Activated naive CD8-positive, alpha-beta T cell treated with anti-CD3 and anti-CD28 coated beads, Interleukin-2, amount 10 ng/mL, durations not matched to agents 7 days and 5 days (primary cell): ENCODE measurements at regions of chr17 and their contacts with region 1.

Region 1: DNA sequence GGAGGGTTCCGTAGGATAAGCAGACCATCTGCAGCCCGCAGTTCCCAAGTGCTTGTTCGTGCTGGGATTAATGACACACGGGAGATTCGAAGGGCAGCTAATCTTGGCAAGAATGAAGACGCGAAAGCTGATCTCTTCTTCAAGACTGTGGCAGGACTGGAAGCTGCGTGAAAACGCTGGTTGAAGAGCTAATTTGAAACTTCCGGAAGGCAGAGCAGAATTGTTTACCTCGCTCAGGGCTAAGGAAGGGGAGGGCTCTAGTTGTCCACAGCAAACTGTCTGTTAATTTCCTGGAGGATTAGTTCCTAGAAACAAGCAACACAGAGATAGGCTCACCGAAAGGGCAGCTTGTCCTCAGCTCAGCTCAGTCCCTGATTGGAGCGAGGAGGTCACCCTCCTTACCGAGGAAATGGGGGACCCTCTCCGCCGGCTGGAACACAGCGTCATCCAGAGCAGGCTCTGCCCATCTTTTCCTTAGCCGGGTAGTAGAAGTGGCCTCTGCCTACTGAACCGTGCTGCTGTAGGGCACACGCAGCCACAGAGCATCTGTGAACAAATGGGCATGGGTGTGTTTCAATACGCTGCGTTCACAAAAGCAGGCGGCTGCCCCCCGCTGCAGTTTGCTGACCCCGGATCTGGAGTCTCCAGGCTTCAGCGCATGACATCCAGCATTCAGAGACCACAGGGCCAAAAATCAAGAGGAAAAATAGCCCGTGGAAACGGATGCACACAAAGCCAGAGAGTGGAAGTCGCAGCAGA is 16.7 kb upstream of the BAIAP2 start:
- DNase-seq: peak; percentile 68
- ATAC-seq: peak; percentile 94
- H3K4me3 Mint-ChIP-seq: peak overlapping the region; percentile 85
- H3K27ac Mint-ChIP-seq: peak overlapping the region; percentile 95
- H3K4me1 Mint-ChIP-seq: peaks cover 30% of the 10 kb centered on the region
- H3K27me3 Mint-ChIP-seq: no peaks in the 10 kb centered on the region

Region 2: GRCh38 chr17:80920441-80920840 is 97.8 kb before region 1 on chr17:
- POLR2A ChIA-PET with region 1: no interaction called
- DNase-seq: no peak
- ATAC-seq: no peak
- H3K4me3 Mint-ChIP-seq: no peak overlapping the region
- H3K27ac Mint-ChIP-seq: no peak overlapping the region
- H3K4me1 Mint-ChIP-seq: no peaks in the 10 kb centered on the region
- H3K27me3 Mint-ChIP-seq: no peaks in the 10 kb centered on the region

Region 3: DNA sequence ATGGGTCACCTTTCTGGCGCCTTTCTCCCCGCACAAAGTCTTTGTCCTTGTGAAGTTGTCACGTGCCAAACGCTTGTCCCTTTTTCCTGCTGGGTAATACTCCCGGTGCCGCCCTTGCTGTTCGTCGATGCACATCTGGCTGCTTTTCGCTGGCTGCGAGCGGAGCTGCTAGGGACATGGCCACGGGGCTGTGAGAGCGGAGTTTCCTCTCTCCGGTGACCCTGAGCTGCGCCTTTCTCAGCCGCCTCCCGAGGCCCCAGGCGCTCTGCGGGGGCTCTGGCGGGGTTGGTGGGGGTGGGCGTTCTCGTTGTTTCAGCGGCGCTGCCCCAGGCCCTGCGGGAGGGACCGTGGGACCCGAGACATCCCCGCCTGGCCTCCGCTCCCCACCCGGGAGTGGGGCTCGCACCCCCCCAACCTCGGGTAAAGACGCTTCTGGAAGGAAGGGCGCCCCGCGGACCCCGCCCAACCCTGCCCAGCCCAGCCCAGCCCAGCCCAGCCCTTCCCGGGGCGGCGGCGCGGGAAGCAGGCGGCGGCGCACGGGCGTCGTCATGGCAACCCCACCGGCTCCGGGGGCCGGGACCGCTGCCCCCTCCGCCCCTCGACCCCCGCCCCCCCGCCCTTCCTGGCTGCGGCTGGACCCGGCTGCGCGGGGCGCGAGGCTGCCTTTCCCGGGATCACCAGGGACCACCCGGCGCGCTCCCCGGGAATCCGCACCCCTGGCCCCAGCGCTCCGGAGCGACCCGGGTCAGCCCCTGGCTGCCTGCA is 14.3 kb before region 1 on chr17:
- POLR2A ChIA-PET with region 1: interaction called, 15 read pairs
- DNase-seq: no peak
- ATAC-seq: peak; percentile 24
- H3K4me3 Mint-ChIP-seq: peak overlapping the region; percentile 74
- H3K27ac Mint-ChIP-seq: no peak overlapping the region
- H3K4me1 Mint-ChIP-seq: peaks cover 14% of the 10 kb centered on the region
- H3K27me3 Mint-ChIP-seq: peaks cover 46% of the 10 kb centered on the region

Region 4: DNA sequence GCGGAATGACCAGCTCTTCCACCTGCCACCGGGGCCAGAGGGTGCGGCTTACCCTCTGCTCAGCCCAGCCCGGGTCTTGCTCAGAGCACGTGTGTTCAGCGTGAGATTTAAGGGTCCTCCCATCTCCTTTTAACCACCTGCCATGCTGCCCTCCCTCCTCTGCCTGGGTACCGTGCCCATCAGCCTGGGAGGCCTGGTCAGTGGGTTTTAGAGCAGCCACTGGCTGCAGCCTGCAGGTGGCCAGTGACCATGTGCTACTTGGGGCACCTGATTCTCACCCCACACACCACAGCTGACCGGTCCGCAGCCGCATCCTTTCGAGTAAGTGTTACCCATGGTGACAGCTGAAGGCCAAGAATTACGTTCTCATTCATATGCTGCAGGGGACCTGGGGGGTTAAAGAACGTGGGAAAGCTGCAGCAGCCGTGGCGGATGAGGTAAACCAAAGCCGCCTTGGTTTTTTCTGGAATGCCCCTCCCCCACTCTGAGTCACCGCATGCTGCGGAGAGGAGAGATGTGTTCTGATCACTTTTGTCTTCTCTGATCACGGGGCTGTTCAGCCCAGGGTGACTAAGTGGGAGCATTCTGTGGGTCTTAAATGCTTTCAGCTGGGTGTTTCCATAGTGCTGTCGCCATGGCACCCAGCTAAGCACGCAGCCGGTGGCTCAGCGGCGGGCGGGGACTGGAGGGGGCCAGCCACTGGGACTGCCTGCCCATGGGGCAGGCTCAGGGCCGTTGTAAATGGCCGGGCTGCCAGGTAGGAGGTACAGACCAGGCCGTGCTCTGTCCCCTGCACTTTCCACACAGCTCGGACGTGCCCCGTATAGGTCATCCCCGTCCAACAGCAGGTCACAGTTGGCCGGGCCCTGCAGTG is 76.5 kb after region 1 on chr17:
- POLR2A ChIA-PET with region 1: interaction called, 12 read pairs
- DNase-seq: peak; percentile 81
- ATAC-seq: peak; percentile 91
- H3K4me3 Mint-ChIP-seq: peak overlapping the region; percentile 37
- H3K27ac Mint-ChIP-seq: peak overlapping the region; percentile 64
- H3K4me1 Mint-ChIP-seq: peaks cover 10% of the 10 kb centered on the region
- H3K27me3 Mint-ChIP-seq: no peaks in the 10 kb centered on the region